ENCODE measurements at regions of chr7 and their contacts with region 1.

Region 1: DNA sequence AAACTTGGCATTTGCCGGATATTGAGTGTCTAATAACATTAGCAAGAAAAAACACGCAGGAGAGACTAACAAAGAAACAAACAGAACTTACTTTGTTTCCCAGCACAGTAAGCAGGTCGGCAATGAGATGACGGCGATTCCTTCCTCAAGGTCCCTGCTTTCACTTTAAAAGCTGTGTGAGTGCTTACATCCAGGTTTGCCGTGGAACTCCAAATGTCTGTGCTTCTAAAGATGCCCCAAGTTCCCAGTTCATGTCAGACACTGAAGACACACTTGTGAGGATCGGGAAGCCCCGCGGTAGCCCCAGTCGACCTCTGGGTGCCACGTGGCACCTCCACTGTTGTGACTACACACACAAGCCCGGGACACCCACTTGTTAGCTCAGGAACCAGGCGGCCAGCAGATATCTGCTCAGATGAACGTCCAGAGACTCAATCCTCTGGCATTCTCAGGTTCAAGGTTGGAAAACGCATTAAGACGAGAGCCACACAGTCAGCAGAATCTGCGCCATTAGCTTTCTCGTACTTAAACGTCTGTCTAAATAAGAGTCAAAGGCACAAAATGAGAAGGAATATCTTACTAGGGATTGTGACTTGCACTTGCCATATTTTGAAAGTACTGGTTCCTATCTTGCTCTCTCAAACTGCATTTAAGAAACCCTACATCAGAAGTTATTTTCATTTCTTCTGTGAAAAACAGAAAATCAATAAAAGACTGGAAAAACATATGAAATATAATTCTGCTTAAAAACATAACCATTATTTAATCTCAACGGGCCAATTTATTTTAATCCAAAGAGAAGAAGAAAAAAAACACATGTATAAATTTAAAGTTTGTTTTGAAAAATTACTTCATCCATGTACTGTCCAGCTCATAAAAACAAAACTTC is 207.6 kb upstream of the KLF14 start:
- DNase-seq: peak; percentile 49 to 80
- ATAC-seq: peak; percentile 75 to 78
- H3K4me3 ChIP-seq: peak overlapping the region; percentile 52
- H3K27ac ChIP-seq: peak overlapping the region; percentile 86 to 87
- H3K4me1 ChIP-seq: peaks cover 82% of the 10 kb centered on the region
- CTCF ChIP-seq: no peak
- EP300 ChIP-seq: no peak
- POLR2A ChIP-seq: no peak
- RAD21 ChIP-seq: 0 out of 5 replicates have a peak, but pooled peaks of 1 of the 2 experiments have one; percentile 19

Region 2: GRCh38 chr7:130662426-130662825 is 279.1 kb before region 1 on chr7:
- CTCF ChIA-PET with region 1: no interaction called
- POLR2A ChIA-PET with region 1: no interaction called
- DNase-seq: no peak
- ATAC-seq: no peak
- H3K4me3 ChIP-seq: no peak overlapping the region
- H3K27ac ChIP-seq: no peak overlapping the region
- H3K4me1 ChIP-seq: no peaks in the 10 kb centered on the region
- CTCF ChIP-seq: no peak
- EP300 ChIP-seq: no peak
- POLR2A ChIP-seq: no peak
- RAD21 ChIP-seq: no peak

Region 3: GRCh38 chr7:130865408-130866236 is 75.9 kb before region 1 on chr7:
- CTCF ChIA-PET with region 1: no interaction called
- POLR2A ChIA-PET with region 1: no interaction called
- DNase-seq: no peak
- ATAC-seq: peak; percentile 41 to 57
- H3K4me3 ChIP-seq: no peak overlapping the region
- H3K27ac ChIP-seq: no peak overlapping the region
- H3K4me1 ChIP-seq: peaks cover 2% of the 10 kb centered on the region; the same call in 2 of the 3 replicates
- CTCF ChIP-seq: no peak
- EP300 ChIP-seq: no peak
- POLR2A ChIP-seq: no peak
- RAD21 ChIP-seq: no peak

Region 4: DNA sequence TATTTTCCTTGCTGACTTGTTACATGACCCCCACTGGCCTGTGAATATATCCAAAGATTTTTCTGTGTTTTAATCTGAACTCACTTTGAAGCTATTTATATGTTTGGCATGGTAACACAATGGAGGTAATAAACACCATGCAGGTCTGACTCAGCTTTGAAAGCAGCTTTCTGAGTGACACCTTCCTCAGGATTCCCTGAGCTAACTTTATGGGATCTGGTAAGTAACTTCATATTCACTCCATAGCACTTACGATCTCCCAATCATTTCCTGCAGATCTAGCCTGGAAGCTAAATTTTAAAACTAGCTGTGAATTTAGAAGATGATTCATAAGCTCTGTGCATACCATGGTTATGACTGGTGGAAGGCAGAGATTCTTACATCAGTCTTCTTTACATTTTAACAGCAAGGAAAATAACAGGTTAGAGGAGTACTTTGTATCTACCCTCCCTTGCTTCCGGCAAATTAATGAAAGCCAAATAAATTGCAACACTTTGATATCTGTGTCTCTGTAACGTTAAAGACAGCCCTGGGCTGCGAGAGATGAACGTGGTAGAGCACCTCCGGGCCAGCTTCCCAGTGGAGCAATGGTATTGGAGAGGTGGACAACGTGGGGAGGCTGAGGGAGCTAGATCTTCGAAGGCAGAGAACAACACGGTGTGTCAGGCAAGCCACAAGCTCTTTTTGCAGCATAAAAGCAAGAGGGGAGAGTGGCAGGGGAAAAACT is 37.4 kb before region 1 on chr7:
- CTCF ChIA-PET with region 1: interaction called, 114 read pairs
- POLR2A ChIA-PET with region 1: interaction called, 15 read pairs
- DNase-seq: peak; percentile 80 to 94
- ATAC-seq: peak; percentile 63 to 65
- H3K4me3 ChIP-seq: peak overlapping the region; percentile 10; the same call in 1 of the 3 replicates
- H3K27ac ChIP-seq: peak overlapping the region; percentile 92 to 93
- H3K4me1 ChIP-seq: peaks cover 94% of the 10 kb centered on the region
- CTCF ChIP-seq: no peak
- EP300 ChIP-seq: peak; percentile 94 to 95; a peak in 3 of 5 replicates
- POLR2A ChIP-seq: no peak
- RAD21 ChIP-seq: peak in 1 of 2 experiments; percentile 46; a peak in 1 of 5 replicates

Region 5: DNA sequence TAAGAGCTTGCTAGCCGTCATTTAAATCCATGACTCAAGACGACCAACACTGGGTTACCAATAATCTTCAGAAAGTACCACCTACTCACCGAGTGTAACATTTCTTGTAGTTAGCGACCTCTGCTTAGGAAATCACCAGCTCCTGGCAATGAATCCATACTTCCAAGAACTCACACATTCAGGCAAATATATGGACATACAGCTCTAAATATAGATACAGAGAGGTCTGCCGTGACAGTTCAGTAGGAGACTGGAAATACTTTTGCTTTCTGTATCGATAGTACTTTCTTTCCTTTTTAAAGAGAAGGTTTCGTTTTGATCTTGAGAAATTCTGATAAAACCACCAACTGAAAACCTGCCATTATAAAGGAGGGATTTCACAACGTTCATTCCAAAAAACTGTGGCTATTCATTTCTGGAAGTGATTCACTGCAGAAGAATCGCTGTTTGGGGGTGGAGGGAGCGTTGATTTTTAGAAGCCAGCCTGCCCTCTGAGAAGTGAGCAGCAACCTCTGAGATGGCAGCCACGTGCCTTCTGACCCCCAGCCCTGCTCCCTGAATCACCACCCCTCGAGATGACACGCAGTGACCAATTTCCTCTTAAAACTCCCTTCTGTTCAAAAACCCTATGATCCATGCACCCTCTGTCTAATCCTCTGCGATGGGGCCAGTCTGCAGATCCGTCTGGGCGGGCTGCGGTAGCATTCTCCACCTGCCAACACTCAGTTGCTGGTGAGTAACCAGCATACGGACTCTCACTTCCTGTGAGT is 28.5 kb before region 1 on chr7:
- CTCF ChIA-PET with region 1: interaction called, 4 read pairs
- POLR2A ChIA-PET with region 1: interaction called, 12 read pairs
- DNase-seq: peak in 1 of 2 experiments; percentile 91
- ATAC-seq: peak; percentile 75 to 78
- H3K4me3 ChIP-seq: peak overlapping the region; percentile 62
- H3K27ac ChIP-seq: peak overlapping the region; percentile 85 to 93
- H3K4me1 ChIP-seq: peaks cover 61% of the 10 kb centered on the region
- CTCF ChIP-seq: no peak
- EP300 ChIP-seq: peak; percentile 80 to 91; a peak in 4 of 5 replicates
- POLR2A ChIP-seq: peak; percentile 36; the same call in 1 of the 2 replicates
- RAD21 ChIP-seq: peak in 1 of 2 experiments; percentile 34; a peak in 2 of 5 replicates

Region 6: GRCh38 chr7:130929896-130930659 is 11.5 kb before region 1 on chr7:
- CTCF ChIA-PET with region 1: interaction called, 32 read pairs
- POLR2A ChIA-PET with region 1: interaction called, 6 read pairs
- DNase-seq: peak in 1 of 2 experiments; percentile 77
- ATAC-seq: peak; percentile 50 to 56
- H3K4me3 ChIP-seq: no peak overlapping the region
- H3K27ac ChIP-seq: peak overlapping the region; percentile 75 to 85
- H3K4me1 ChIP-seq: peaks cover 84% of the 10 kb centered on the region
- CTCF ChIP-seq: no peak
- EP300 ChIP-seq: peak in 1 of 2 experiments; percentile 20; a peak in 1 of 5 replicates
- POLR2A ChIP-seq: no peak
- RAD21 ChIP-seq: no peak

Region 7: DNA sequence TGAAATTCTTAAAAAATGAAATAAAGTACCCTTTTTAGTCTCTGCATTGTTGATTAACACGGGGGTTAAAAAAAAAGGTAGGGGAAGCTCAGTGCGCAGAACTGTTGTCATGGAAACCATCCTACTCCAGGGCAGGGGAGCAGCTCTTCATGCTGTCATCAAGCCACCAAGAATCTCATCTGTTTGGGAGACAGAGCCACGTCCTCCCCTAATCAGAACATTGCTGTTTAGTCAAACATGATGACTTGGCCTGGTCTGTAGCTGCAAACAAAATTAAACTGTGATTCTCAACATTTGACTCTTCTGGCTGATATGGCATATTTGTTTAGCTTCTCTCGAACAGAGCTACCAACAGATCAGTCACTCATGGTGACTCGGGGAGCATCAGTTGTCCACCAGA is 46.9 kb after region 1 on chr7:
- CTCF ChIA-PET with region 1: no interaction called
- POLR2A ChIA-PET with region 1: no interaction called
- DNase-seq: no peak
- ATAC-seq: no peak
- H3K4me3 ChIP-seq: no peak overlapping the region
- H3K27ac ChIP-seq: no peak overlapping the region; a peak in 1 of 6 replicates
- H3K4me1 ChIP-seq: peaks cover 67% of the 10 kb centered on the region
- CTCF ChIP-seq: no peak
- EP300 ChIP-seq: no peak
- POLR2A ChIP-seq: no peak
- RAD21 ChIP-seq: no peak